K562 (cell line): ENCODE measurements at regions of chr11 and their contacts with region 1.

Region 1: DNA sequence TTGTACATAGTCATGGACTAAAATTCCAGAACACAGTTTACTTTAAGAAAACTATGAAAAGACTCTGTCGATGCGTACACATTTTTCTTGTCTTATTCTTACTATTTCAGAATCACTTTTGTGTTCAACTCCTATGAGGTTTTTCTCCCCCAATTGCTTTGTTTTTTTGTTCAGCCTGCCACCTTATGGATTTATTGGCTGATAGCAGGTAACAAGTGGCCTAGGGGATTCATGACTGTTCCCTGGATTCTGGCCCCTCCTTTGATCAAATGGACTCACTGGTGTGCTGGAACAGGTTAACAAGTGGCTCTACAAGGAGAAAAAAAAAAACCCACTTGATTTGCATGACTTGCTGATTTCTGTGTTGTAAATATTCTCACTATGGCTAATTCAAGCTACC is 10.6 kb downstream of the MMP20 start:
- DNase-seq: no peak
- ATAC-seq: no peak
- H3K4me3 ChIP-seq: no peak overlapping the region
- H3K27ac ChIP-seq: no peak overlapping the region
- H3K4me1 ChIP-seq: no peaks in the 10 kb centered on the region
- H3K27me3 ChIP-seq: peaks cover 0 to 10% of the 10 kb centered on the region in 2 experiments; a peak in 2 of 5 replicates
- CTCF ChIP-seq: no peak
- EP300 ChIP-seq: no peak
- POLR2A ChIP-seq: no peak
- RAD21 ChIP-seq: no peak

Region 2: DNA sequence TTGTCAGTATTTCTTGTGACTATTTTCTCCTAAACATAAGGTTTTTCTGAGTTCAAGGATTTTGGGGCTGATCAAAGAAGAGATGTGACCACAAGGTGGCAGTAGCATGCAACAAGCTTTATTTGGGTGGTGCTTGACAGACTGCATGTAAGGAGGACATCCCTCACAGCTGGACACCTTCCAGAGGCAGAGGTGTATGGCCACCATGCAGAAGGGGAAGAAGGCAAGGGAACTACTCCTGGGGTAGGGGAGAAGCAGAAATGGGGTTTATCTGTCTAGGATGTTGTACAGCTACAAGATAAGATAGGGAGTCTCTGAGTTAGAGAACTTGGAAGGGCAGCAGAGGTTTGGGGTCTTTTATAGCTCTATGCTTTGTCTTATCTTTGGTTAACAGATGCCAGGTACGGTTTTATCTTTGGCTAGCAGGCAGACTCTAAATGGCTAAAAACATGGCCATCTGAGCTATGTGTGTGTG is 272.6 kb before region 1 on chr11:
- CTCF ChIA-PET with region 1: interaction called, 3 read pairs
- POLR2A ChIA-PET with region 1: no interaction called
- in situ Hi-C with region 1: no loop called
- intact Hi-C with region 1: loop called (anchors 2 kb)
- DNase-seq: peak; percentile 80 to 96 (median 86)
- ATAC-seq: peak; percentile 89
- H3K4me3 ChIP-seq: no peak overlapping the region
- H3K27ac ChIP-seq: no peak overlapping the region; the same call in 2 of the 3 replicates
- H3K4me1 ChIP-seq: peaks cover 3 to 19% of the 10 kb centered on the region in 2 experiments; a peak in 4 of 5 replicates
- H3K27me3 ChIP-seq: no peaks in the 10 kb centered on the region; a peak in 1 of 5 replicates
- CTCF ChIP-seq: peak; percentile 78 to 89 (median 88)
- EP300 ChIP-seq: peak; percentile 93
- POLR2A ChIP-seq: no peak
- RAD21 ChIP-seq: peak; percentile 81 to 88

Region 3: DNA sequence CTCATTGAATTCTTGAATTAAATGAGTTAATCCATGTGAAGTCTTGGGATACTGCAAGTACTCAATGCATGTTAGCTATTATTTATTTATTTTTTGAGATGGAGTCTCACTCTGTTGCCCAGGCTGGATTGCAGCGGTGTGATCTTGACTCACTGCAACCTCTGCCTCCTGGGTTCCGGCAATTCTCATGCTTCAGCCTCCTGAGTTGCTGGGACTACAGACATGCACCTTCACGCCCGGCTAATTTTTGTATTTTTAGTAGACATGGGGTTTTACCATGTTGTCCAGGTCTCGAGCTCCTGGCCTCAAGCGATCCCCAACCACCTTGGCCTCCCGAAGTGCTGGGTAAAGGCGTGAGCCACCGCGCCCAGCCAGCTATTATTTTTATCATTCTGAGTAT is 93.4 kb before region 1 on chr11:
- CTCF ChIA-PET with region 1: no interaction called
- POLR2A ChIA-PET with region 1: no interaction called
- in situ Hi-C with region 1: no loop called
- intact Hi-C with region 1: loop called (anchors 1 kb)
- DNase-seq: no peak
- ATAC-seq: no peak
- H3K4me3 ChIP-seq: no peak overlapping the region
- H3K27ac ChIP-seq: no peak overlapping the region
- H3K4me1 ChIP-seq: no peaks in the 10 kb centered on the region
- H3K27me3 ChIP-seq: peaks cover 4 to 8% of the 10 kb centered on the region in 2 experiments; a peak in 3 of 5 replicates
- CTCF ChIP-seq: no peak
- EP300 ChIP-seq: no peak
- POLR2A ChIP-seq: no peak
- RAD21 ChIP-seq: no peak

Region 4: GRCh38 chr11:102560555-102561011 is 53.9 kb before region 1 on chr11:
- CTCF ChIA-PET with region 1: no interaction called
- POLR2A ChIA-PET with region 1: no interaction called
- in situ Hi-C with region 1: no loop called
- intact Hi-C with region 1: no loop called
- DNase-seq: no peak
- ATAC-seq: no peak
- H3K4me3 ChIP-seq: no peak overlapping the region
- H3K27ac ChIP-seq: no peak overlapping the region
- H3K4me1 ChIP-seq: no peaks in the 10 kb centered on the region; a peak in 2 of 5 replicates
- H3K27me3 ChIP-seq: no peaks in the 10 kb centered on the region
- CTCF ChIP-seq: no peak
- EP300 ChIP-seq: no peak
- POLR2A ChIP-seq: no peak
- RAD21 ChIP-seq: no peak